Activated B cell treated with CpG ODN at 0.5 μM for 24 hours (primary cell): ENCODE measurements at regions of chr16 and their contacts with region 1.

Region 1: DNA sequence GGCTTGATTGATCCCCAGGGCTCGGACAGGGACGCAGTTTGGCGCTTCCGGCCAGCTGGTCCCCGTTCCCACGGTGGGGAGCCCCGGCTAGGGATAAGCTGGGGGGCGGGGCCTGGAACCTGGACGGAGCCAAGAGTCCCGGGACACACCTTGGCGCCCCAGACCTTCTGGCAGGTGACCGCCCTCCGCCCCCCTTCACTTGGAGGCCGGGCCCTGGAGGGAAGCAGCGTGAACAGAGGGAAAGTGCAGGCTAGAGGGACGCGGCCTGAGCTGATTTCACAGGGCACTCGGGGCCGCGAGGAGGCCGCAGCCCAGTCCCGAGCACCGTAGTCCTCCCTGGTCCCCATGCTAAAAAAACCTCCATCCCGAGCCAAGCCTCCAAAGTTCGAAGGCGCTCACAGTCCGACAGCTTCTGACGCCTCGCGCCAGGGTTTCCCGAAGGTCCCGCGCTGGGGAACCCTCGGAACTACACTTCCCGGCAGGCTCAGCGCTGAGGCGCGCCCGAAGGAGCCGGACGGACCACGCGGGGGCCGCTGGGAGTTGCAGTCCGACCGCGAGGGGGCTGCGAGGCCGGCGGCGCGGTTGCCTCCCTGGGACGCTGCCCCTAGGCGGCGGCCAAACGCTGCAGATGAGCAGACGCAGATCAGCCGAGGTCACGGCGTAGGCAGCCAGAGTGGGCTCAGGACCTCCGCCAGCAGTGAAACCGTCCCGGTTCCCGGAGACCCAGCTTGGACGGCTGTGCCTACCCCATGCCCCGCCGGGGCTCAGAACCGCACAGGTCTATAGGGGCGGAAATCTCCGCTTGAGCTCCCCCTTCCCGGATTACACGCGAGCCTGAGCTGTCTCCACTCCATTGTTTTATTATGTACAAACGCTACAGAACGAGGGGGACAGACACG is at the start of gene TBX6:
- DNase-seq: peak; percentile 93
- ATAC-seq: peak; percentile 77
- H3K4me3 Mint-ChIP-seq: peak within 1 kb of the TSS; percentile 89
- H3K27ac Mint-ChIP-seq: peak within 1 kb of the TSS; percentile 94
- H3K4me1 Mint-ChIP-seq: peaks cover 50% of the 10 kb centered on the region
- H3K27me3 Mint-ChIP-seq: no peaks in the 10 kb centered on the region
- CTCF ChIP-seq: peak; percentile 67
- total RNA-seq, gene TBX6: 2.3 TPM in 2 replicates

Region 2: GRCh38 chr16:29995911-29996772 is 95.6 kb before region 1 on chr16 and contains the start of gene INO80E:
- CTCF ChIA-PET with region 1: no interaction called
- POLR2A ChIA-PET with region 1: no interaction called
- intact Hi-C with region 1: loop called (anchors 5 kb)
- DNase-seq: peak; percentile 100
- ATAC-seq: peak; percentile 96
- H3K4me3 Mint-ChIP-seq: peak within 1 kb of the TSS; percentile 98
- H3K27ac Mint-ChIP-seq: peak within 1 kb of the TSS; percentile 97
- H3K4me1 Mint-ChIP-seq: peaks cover 29% of the 10 kb centered on the region
- H3K27me3 Mint-ChIP-seq: no peaks in the 10 kb centered on the region
- CTCF ChIP-seq: no peak
- total RNA-seq, gene INO80E: 83.5 and 93.6 TPM in 2 replicates

Region 3: DNA sequence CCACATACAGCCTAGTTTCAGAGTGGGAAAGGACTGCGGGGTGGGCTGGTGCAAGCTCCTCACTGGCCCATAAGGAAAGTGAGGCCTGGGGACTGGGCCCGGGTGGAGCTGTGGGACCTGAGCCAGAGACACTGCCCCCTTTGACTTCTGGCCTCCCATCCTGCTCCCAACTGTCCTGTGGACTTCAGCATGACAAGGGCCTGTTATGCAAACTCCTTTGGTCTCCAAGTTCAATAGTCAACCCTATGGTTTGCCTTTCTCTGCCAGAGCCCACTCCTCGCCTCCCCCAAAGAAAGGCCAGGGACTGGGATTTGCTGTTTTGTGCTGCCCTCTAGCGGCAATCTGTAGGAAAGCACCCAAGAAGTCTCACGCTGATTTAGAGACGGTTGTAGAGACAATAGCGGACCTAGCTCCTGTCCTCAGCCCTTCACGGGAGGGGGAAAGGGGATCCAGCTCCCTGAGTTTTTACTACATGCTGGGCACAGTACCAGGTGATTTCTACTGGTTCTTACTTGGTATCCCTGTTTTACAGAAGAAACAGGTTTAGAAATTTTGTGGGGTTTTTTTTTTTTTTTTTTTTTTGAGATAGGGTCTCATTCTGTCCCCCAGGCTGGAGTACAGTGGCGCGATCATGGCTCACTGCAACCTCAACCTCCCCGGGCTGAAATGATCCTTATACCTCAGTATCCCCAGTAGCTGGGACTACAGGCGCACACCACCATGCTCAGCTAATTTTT is 59.5 kb before region 1 on chr16:
- CTCF ChIA-PET with region 1: no interaction called
- POLR2A ChIA-PET with region 1: no interaction called
- intact Hi-C with region 1: no loop called
- DNase-seq: no peak
- ATAC-seq: peak; percentile 75
- H3K4me3 Mint-ChIP-seq: no peak overlapping the region
- H3K27ac Mint-ChIP-seq: no peak overlapping the region
- H3K4me1 Mint-ChIP-seq: peaks cover 8% of the 10 kb centered on the region
- H3K27me3 Mint-ChIP-seq: peaks cover 54% of the 10 kb centered on the region
- CTCF ChIP-seq: peak; percentile 26

Region 4: GRCh38 chr16:30075507-30076275 is 16.0 kb before region 1 on chr16 and contains the start of gene PPP4C:
- CTCF ChIA-PET with region 1: interaction called, 8 read pairs
- POLR2A ChIA-PET with region 1: interaction called, 43 read pairs
- intact Hi-C with region 1: loop called (anchors 1 kb)
- DNase-seq: peak; percentile 86
- ATAC-seq: peak; percentile 86
- H3K4me3 Mint-ChIP-seq: peak within 1 kb of the TSS; percentile 94
- H3K27ac Mint-ChIP-seq: peak within 1 kb of the TSS; percentile 91
- H3K4me1 Mint-ChIP-seq: peaks cover 35% of the 10 kb centered on the region
- H3K27me3 Mint-ChIP-seq: no peaks in the 10 kb centered on the region
- CTCF ChIP-seq: no peak
- total RNA-seq, gene PPP4C: 124 and 131 TPM in 2 replicates

Region 5: DNA sequence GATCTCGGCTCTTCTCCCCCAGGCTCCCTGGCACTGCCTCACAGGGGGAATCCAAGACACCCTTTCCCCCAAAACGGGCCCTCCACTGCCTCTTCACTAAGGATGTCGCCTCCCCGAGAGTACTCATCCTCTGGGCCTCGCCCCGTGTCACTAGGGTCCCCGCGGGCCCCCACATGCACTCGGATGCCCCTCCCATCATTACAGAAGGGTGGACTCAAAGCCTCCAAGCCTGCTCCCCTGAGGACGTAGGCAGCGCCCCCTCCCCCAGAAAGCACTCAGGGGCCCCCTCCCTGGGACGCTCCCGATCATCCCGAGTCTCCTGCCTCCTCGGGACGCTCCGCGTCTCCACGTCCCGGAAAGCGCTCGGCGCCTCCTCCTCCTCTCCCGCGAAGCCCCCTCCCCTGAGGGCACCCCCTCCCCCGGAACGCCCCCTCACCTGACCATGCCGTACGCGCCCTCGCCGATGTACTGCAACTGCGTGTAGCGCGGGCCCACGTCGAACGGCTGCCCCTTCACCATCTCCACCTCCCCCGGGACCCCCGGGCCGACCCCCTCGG is 31.0 kb after region 1 on chr16:
- CTCF ChIA-PET with region 1: no interaction called
- POLR2A ChIA-PET with region 1: interaction called, 18 read pairs
- intact Hi-C with region 1: loop called (anchors 1 kb)
- DNase-seq: peak; percentile 21
- ATAC-seq: peak; percentile 5
- H3K4me3 Mint-ChIP-seq: peak overlapping the region; percentile 86
- H3K27ac Mint-ChIP-seq: peak overlapping the region; percentile 76
- H3K4me1 Mint-ChIP-seq: peaks cover 22% of the 10 kb centered on the region
- H3K27me3 Mint-ChIP-seq: no peaks in the 10 kb centered on the region
- CTCF ChIP-seq: no peak

Region 6: DNA sequence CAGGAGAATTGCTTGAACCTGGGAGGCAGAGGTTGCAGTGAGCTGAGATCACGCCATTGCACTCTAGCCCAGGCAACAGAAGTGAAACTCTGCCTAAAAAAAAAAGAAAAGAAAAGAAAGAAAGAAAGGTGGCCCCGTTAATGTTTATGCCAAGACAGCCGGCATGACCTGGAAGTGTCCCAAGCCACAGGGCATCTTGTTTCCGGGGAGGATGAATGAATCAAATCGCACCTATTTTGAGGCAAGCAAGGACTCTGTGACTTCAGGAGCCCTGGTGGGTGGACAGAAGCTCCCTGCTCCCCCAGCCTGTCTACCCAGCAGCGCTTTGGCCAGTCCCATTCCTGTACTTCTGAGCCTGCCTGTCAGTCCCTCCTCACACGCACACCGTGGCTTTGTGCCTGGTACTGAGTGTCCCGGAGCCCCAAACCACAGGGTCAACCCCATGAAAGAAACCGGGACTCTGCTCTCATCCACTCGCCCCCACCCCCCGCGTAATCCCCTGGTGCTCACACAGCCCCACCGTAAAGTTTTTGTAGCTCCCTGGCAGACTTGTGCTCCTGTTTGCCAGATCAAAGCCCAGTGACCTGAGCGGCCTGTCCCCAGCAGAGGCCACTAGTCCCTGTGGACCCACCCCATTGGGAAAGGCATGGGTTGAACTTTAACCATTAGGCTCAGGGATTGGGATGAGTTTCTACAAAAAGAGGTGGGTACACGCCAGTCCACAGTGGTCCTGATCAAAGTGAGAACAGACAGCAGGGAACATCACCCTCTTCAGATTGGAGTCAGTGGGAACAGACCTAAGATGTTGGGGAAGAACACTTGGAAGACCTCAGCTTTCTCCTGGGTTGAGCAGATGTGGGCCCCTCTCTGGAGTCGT is 244.1 kb after region 1 on chr16:
- CTCF ChIA-PET with region 1: no interaction called
- POLR2A ChIA-PET with region 1: no interaction called
- intact Hi-C with region 1: loop called (anchors 1 kb)
- DNase-seq: no peak
- ATAC-seq: no peak
- H3K4me3 Mint-ChIP-seq: peak overlapping the region; percentile 82
- H3K27ac Mint-ChIP-seq: peak overlapping the region; percentile 83
- H3K4me1 Mint-ChIP-seq: peaks cover 42% of the 10 kb centered on the region
- H3K27me3 Mint-ChIP-seq: no peaks in the 10 kb centered on the region
- CTCF ChIP-seq: no peak

Region 7: GRCh38 chr16:30378236-30379204 is 286.8 kb after region 1 on chr16:
- CTCF ChIA-PET with region 1: no interaction called
- POLR2A ChIA-PET with region 1: interaction called, 4 read pairs
- intact Hi-C with region 1: loop called (anchors 1 kb)
- DNase-seq: peak; percentile 99
- ATAC-seq: peak; percentile 88
- H3K4me3 Mint-ChIP-seq: peak overlapping the region; percentile 92
- H3K27ac Mint-ChIP-seq: peak overlapping the region; percentile 100
- H3K4me1 Mint-ChIP-seq: peaks cover 62% of the 10 kb centered on the region
- H3K27me3 Mint-ChIP-seq: no peaks in the 10 kb centered on the region
- CTCF ChIP-seq: no peak